Dendritic cell treated with granulocyte-macrophage colony-stimulating factor and Interleukin-4, amounts not matched to agents 40 ng/mL and 50 ng/mL, for 4 days (primary cell): ENCODE measurements at regions of chrX and their contacts with region 1.

Region 1: DNA sequence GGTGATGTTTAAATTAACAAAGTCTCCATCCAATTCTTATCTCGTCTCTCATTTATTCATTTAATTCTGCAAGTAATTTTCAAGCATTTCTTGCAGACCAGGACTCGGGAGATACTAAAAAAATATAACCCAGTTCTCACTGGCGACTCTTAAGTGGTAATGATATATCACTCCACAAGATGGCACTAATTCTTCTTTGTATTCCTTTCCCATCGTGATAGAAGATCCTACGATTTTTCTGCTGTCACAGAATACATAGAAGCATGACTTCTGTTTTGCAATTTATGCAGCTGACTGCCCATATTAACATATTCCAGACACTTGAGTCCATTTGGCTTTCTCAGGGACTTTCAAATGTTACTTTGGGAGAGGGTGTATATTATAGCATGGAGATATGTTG is 64.0 kb upstream of the FGF13 start:
- H3K4me3 Mint-ChIP-seq: no peak overlapping the region
- H3K27ac Mint-ChIP-seq: no peak overlapping the region
- H3K4me1 Mint-ChIP-seq: no peaks in the 10 kb centered on the region
- H3K27me3 Mint-ChIP-seq: no peaks in the 10 kb centered on the region

Region 2: DNA sequence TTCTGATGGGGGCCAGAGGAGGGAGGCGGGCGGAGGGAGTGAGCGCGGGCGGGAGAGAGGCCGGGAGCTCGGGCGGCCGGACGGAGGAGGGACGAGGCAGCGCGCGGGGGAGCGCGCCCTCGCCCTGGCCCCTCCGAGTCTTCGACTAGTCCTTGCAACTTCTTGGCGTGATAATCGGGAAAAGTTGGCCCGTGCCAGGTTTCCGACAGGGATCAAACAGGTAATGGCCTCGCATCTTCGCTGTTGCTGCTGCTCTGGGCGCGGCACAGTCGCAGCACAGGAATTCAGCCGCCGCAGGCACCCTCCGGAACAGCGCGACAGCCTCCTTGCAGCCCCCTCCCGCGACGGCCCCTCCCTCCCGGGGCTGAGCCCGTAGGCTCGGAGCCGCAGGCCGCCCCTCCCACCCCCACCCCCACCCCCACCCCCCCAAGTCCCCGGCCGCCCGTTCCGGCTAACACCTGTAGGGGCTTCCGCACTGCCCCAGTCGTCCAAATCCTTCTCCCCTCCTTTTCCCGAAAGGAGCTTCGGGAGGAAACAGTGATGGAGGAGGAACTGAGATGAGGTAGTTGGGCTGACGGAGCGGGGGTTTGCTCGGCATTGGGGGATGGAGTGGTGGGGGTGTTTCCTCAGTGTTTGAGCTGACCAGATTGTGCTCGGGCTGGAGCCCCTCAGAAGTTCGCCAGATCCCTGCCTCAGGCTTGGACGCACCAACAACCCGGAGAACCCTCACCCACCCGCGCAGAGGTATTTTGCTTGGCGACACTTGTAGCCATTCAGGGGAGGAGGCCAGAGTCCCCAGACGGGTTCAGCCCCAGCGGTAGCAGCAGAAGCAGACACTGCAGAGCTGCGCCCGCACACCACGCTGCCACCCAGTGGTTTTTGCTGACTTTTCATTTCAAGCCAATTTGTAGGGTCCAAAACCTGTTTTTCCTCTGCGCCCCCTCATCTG is 63.8 kb before region 1 on chrX and contains the start of gene FGF13:
- intact Hi-C with region 1: no loop called
- H3K4me3 Mint-ChIP-seq: no peak within 1 kb of the TSS
- H3K27ac Mint-ChIP-seq: no peak within 1 kb of the TSS
- H3K4me1 Mint-ChIP-seq: no peaks in the 10 kb centered on the region
- H3K27me3 Mint-ChIP-seq: peaks cover 46% of the 10 kb centered on the region

Region 3: DNA sequence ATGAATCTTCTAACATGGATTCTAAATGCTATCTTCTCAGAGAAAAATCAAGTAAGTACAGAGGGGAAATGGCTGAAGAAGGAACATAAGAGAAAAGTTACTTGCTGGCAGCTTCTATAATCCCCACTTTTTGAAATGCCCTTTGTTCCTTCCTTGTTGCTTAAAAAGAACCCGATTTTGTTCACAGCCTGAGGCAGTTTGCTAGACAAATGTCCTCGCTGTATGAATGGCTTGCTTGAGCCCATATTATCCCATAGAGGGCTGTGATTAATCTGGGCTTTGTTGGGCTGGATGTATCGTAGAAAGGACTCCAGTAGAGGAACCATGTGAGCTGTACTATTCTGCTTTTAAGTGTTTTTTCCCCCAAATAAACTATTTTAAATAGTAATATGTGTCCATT is 70.3 kb after region 1 on chrX:
- intact Hi-C with region 1: no loop called
- H3K4me3 Mint-ChIP-seq: no peak overlapping the region
- H3K27ac Mint-ChIP-seq: no peak overlapping the region
- H3K4me1 Mint-ChIP-seq: no peaks in the 10 kb centered on the region
- H3K27me3 Mint-ChIP-seq: peaks cover 7% of the 10 kb centered on the region

Region 4: GRCh38 chrX:139454756-139455155 is 679.2 kb after region 1 on chrX:
- intact Hi-C with region 1: loop called (anchors 10 kb)
- H3K4me3 Mint-ChIP-seq: no peak overlapping the region
- H3K27ac Mint-ChIP-seq: no peak overlapping the region
- H3K4me1 Mint-ChIP-seq: no peaks in the 10 kb centered on the region
- H3K27me3 Mint-ChIP-seq: no peaks in the 10 kb centered on the region